Naive thymus-derived CD8-positive, alpha-beta T cell (primary cell): ENCODE measurements at regions of chr2 and their contacts with region 1.

Region 1: DNA sequence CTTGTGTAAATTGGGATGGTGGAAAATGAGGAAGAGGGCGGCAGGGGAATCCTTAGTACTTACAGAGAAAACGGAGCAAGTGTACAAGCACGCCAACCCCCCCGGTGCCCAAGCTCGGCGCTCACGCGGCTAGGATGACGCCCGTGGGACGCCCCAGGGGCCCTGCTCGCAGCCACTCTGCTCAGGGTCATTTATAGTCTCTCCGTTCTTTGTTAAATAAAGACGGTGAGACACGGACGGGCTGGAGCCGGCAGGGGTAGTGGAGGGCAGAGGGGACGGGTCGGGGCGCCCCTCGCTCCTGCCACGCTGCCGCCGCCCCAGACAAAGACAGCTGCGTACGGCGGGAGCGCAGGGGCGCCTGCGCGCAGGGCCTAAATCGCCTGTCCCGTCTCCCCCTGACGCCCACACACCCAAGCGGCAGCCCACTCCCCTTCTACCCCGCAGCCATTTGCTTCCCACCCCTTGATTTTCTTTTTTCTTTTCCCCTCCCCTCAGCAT is 37.8 kb downstream of the PCBP1 start:
- DNase-seq: peak in 9 of 10 donors; percentile 49 to 84 (median 65)
- ATAC-seq: peak; percentile 63 to 71
- H3K4me3 Mint-ChIP-seq: peak overlapping the region; percentile 90 to 99 (median 97)
- H3K27ac Mint-ChIP-seq: peak overlapping the region; percentile 99 to 100 (median 100)
- H3K4me1 Mint-ChIP-seq: peaks cover 33 to 86% (median 81%) of the 10 kb centered on the region in 4 donors
- H3K27me3 Mint-ChIP-seq: no peaks in the 10 kb centered on the region

Region 2: DNA sequence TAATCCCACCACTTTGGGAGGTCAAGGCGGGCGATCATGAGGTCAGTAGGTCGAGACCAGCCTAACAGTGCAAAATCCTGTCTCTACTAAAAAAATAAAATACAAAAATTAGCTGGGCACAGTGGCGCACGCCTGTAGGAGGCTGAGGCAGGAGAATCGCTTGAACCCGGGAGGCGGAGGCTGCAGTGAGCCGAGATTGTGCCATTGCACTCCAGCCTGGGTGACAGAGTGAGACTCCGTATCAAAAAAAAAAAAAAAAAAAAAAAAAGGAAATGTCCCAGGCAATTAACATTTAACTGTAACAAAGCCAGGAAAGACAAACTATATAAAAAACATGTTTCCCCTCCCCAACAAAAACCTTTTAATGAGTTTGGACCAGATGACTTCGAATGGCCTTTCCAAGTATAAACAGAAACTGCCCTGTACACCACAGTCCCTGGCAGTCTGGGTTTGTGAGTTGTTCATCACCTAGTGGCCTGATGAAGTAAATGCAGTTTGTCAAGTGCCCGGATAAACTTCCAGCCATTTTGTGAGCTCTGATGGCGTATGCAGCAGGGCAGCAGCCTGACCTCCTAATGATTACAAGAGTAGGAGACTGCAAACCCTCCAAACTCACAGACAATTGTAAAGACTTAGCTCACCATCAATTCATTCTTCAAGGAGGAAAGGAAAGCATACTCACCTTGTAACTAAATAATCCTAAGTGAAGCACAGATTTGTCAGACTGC is 54.3 kb before region 1 on chr2:
- POLR2A ChIA-PET with region 1: interaction called, 1,727 read pairs
- DNase-seq: peak in 9 of 10 donors; percentile 38 to 81 (median 65)
- ATAC-seq: peak; percentile 63 to 68
- H3K4me3 Mint-ChIP-seq: peak overlapping the region; percentile 54 to 86 (median 76)
- H3K27ac Mint-ChIP-seq: peak overlapping the region; percentile 86 to 100 (median 96)
- H3K4me1 Mint-ChIP-seq: peaks cover 17 to 57% (median 52%) of the 10 kb centered on the region in 4 donors
- H3K27me3 Mint-ChIP-seq: no peaks in the 10 kb centered on the region

Region 3: GRCh38 chr2:70104231-70105111 is 20.6 kb before region 1 on chr2:
- POLR2A ChIA-PET with region 1: interaction called, 286 read pairs
- DNase-seq: peak in 3 of 10 donors; percentile 45 to 69 (median 48)
- ATAC-seq: no peak
- H3K4me3 Mint-ChIP-seq: peak overlapping the region; percentile 76 to 89 (median 84)
- H3K27ac Mint-ChIP-seq: peak overlapping the region; percentile 91 to 99 (median 96)
- H3K4me1 Mint-ChIP-seq: peaks cover 32 to 59% (median 57%) of the 10 kb centered on the region in 4 donors
- H3K27me3 Mint-ChIP-seq: no peaks in the 10 kb centered on the region